ENCODE measurements at regions of chr3 and their contacts with region 1.

Region 1: DNA sequence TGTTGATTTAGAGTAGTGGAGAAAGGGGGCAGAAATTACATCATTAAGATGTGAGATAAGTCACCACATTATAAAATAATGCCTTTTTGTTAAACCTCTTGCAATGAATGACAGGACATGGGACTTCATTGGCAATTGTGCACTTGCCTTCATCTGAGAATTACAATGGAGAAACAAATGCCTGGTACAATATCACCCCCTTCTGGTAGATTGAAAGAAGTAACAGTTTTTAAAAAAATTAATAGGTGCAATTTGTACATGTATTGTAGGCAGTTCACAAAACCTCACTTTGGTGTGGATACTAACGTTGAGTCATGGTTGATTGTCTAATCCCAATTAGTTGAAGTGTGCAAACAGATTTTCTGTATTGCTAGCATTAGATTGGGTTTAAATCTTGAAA is 4.6 kb upstream of the P2RY14 start:
- DNase-seq: no peak
- ATAC-seq: peak; percentile 59

Region 2: GRCh38 chr3:151168269-151169094 is 114.4 kb before region 1 on chr3:
- intact Hi-C with region 1: loop called in 1 of 2 experiments (anchors 5 kb)
- DNase-seq: peak; percentile 68 to 93
- ATAC-seq: peak; percentile 92

Region 3: GRCh38 chr3:151227807-151228665 is 54.9 kb before region 1 on chr3:
- intact Hi-C with region 1: loop called (anchors 2 to 10 kb)
- DNase-seq: peak; percentile 46 to 73
- ATAC-seq: peak; percentile 86

Region 4: DNA sequence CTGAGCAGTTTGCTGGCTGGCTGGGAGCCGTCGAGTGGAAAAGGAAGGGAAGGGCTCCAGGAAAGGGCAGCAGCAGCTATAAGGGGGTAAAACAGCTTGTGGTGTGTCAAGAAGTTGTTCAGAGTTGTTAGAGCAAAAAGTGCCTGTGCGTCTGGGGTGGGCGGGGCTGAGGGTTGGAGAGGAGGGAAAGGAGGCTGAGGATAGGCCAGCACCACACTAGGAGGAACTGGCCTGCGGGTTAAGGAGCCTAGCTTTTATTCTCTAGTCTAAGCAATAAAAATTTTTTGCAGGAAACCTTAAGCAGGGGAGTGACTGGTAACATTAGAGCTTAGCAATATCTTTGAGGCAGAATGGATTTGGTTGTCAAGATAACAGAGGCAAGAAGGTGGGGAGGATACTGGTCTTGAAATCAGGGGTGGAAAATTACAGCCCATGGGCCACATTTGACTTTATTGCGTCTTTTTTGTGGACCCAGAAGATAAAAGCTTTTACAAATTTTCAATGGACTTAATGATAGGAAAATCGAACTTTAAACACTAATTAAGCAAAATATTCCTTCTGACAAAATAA is 316.3 kb after region 1 on chr3:
- intact Hi-C with region 1: no loop called
- DNase-seq: no peak
- ATAC-seq: no peak

Measured in left colon (tissue), 2 donors.